K562 (cell line): ENCODE measurements at regions of chr17 and their contacts with region 1.

Region 1: DNA sequence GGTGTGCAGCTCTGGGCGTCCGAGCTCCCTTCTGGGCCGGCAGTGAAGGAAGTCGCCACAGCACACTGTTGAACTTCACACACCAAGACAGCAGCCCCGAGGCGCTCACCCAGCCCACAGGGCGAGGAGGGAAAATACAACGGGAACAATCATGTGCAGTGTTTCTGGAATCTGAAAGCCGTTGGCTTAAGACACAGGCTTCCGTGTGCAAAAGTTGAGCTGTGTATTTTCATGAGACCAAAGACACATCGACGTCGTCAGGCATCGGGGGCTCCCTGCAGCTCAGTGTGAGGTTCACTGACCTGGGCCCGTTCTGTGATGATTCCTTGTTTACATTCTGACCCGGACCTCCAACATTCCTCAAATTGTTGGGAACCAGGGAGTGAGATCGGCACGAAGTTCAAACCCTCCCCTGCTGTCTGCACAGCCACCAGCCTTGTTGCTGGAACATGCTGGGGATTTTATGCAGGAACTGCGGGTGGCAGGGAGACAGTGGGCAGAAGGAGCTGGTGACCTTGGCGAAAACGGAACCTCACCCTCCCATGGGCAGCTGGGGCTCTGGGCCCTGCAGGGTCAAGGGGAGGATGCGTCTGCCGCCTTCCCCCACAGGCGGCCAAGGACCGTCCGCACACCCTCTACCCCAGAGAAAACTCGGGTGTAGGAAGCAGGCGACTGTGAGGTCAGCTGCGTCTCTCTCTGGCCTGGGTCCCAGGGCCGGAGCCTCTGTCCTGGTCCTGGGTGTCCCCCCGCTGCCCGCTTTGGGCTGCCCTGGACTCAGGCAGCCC is 72.2 kb downstream of the METRNL start:
- DNase-seq: peak in 1 of 4 experiments; percentile 9
- ATAC-seq: no peak
- H3K4me3 ChIP-seq: no peak overlapping the region
- H3K27ac ChIP-seq: no peak overlapping the region
- H3K4me1 ChIP-seq: peaks cover 5 to 37% of the 10 kb centered on the region in 2 experiments; a peak in 4 of 5 replicates
- H3K27me3 ChIP-seq: peaks cover 13 to 63% of the 10 kb centered on the region in 2 experiments
- CTCF ChIP-seq: no peak
- EP300 ChIP-seq: no peak
- POLR2A ChIP-seq: no peak
- RAD21 ChIP-seq: no peak

Region 2: DNA sequence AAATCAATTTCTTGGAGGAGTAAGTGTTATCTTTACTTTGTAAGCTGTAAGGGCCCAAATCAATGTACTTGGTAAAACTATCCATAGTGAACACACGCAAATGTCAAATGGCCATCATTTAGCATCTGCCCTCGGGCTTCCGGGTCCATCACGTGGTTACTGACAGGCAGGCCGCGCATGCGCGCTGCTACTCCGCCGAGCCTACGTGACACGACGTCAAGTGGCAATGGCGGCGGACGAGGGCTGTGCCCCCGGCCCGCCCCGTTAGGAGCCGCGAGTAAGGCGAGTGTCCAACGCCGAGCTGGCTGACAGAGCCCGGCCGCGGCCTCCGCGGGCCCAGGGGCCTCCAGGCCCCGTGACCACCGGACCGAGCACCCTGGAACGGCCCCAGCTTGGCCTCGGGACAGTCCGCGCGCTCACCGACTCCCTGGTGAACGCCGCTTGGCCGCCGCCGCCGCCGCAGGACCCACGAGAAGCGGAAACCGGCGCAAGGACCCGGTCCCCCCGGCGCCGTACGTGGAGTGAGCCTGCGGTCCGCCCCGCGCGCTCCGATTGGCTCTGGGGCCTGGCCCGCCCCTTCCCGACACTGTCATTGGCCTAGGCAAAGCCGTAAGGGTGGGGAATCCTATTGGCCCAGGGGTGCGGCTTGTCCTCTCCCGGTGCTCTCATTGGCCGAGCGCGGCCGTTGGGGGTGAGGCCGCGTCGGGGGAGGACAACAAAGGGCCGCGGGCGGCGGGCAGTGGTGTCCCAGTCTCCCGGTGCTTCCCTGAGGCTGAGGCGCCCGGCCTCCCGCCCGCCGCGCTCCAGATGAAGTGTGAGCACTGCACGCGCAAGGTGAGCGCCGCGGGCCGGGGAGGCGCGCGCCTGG is 693.4 kb before region 1 on chr17 and contains the start of gene NARF:
- CTCF ChIA-PET with region 1: no interaction called
- POLR2A ChIA-PET with region 1: no interaction called
- in situ Hi-C with region 1: no loop called
- intact Hi-C with region 1: no loop called
- DNase-seq: peak; percentile 95 to 99 (median 97)
- ATAC-seq: peak; percentile 95
- H3K4me3 ChIP-seq: peak within 1 kb of the TSS; percentile 83
- H3K27ac ChIP-seq: peak within 1 kb of the TSS; percentile 97
- H3K4me1 ChIP-seq: peaks cover 49 to 67% of the 10 kb centered on the region in 2 experiments
- H3K27me3 ChIP-seq: no peaks in the 10 kb centered on the region
- CTCF ChIP-seq: no peak
- EP300 ChIP-seq: no peak
- POLR2A ChIP-seq: peak; percentile 98
- RAD21 ChIP-seq: peak; percentile 12 to 16; a peak in 2 of 4 replicates
- polyA plus RNA-seq, gene NARF: 60.4 to 114 TPM

Region 3: DNA sequence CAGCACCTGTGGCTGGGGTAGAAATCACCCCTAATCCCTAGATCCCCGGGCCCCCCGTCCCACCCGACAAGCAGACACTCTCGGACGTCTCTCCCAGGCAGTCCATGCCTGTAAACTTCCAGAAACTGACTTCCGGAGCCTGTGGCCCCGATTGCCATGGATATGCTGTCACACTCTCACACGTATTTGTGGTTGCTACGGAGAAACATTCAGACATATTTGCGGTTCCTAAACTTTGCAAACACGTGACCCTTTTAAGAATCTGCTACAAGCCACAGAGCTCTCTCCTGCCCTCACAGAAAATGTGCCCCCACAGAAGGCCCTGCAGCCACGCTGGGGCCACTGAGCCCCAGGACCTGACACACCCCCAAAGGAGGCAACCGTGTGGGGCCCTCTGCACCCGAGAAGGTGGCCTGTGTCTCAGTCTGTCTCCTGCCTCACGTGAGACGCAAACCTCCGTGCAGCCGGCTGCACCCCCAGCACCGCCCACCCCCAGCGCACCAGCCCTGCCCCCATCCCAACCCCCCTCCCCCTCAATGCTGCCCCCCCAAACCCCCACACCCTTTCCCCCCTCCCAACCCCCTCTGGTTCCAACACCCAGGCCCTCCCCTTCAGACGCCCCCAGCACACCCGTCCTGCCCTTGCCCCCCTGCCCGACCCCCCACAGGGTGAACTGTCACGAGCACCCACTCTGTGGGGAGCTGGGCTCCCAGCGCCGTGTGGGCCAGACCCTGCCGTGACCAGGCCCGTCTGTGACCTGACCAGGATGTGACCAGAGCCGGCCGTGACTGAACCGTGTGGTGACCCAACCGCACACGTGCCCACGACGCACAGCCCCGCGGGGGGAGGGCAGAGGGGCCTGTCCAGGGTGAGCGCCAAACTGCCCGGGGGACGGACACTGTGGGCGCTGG is 138.5 kb before region 1 on chr17:
- CTCF ChIA-PET with region 1: no interaction called
- POLR2A ChIA-PET with region 1: no interaction called
- in situ Hi-C with region 1: no loop called
- intact Hi-C with region 1: no loop called
- DNase-seq: no peak
- ATAC-seq: no peak
- H3K4me3 ChIP-seq: no peak overlapping the region
- H3K27ac ChIP-seq: no peak overlapping the region
- H3K4me1 ChIP-seq: peaks cover 0 to 13% of the 10 kb centered on the region in 2 experiments; a peak in 1 of 5 replicates
- H3K27me3 ChIP-seq: no peaks in the 10 kb centered on the region
- CTCF ChIP-seq: no peak
- EP300 ChIP-seq: no peak
- POLR2A ChIP-seq: no peak
- RAD21 ChIP-seq: no peak

Region 4: DNA sequence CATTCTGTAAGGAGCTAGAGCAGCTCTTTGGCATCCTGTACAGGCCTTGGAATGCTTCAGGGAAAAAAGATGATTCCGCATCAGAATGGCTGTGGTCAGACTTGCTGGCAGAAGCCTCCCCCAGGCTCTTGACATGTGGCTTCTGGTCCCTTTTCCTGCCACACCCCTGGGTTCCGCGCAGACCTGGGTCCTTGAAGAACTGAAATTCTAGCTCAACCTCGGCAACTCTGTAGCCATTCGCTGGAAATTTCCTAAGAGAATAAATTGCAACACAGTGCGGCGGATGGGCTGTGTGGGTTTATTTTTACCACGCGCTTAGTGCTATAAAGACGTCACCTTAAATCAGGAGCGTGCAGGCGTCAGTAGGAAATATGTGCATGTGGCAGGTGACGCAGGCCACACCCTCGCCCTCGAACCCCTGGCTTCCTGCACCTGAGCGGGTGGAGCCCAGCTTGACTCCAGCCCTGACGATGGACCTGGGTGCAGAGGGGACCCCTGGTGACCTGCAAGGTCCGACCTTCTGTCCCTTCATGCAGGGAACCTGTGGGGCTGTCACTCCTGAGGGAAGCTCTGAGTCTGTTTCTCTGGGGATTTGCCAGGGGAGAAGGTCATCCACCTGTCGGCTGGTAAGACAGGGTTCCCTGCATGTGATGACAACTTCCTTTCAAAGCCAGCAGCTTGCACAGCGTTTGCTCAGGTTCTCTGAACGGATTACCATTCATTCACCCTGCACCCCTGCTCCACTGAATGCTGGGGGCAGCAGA is 25.9 kb before region 1 on chr17:
- CTCF ChIA-PET with region 1: no interaction called
- POLR2A ChIA-PET with region 1: no interaction called
- in situ Hi-C with region 1: no loop called
- intact Hi-C with region 1: no loop called
- DNase-seq: no peak
- ATAC-seq: no peak; the same call in 2 of the 3 replicates
- H3K4me3 ChIP-seq: no peak overlapping the region
- H3K27ac ChIP-seq: no peak overlapping the region
- H3K4me1 ChIP-seq: peaks cover 13 to 40% of the 10 kb centered on the region in 2 experiments; a peak in 4 of 5 replicates
- H3K27me3 ChIP-seq: peaks cover 32 to 61% of the 10 kb centered on the region in 2 experiments
- CTCF ChIP-seq: no peak
- EP300 ChIP-seq: no peak
- POLR2A ChIP-seq: no peak
- RAD21 ChIP-seq: no peak

Region 5: DNA sequence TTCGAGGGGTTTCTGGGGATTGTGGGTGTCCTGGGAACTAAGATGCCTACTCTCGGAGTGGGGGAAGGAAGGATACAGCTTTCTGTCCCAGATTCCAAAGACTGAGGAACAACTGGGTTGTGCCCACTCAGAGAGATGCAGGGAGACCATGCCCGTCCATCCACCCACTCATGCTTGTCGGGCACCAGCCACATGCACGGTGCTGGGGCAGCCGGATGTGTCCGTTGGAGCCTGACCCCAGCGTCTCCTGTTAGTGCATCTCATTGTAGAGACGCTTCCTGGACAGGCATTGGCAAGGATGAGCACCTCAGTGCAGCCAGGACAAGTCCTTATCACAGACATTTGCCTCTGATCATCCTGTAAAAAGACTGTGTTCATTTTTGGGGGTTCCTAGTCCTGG is 14.1 kb before region 1 on chr17:
- CTCF ChIA-PET with region 1: no interaction called
- POLR2A ChIA-PET with region 1: interaction called, 10 read pairs
- in situ Hi-C with region 1: no loop called
- intact Hi-C with region 1: no loop called
- DNase-seq: no peak
- ATAC-seq: no peak
- H3K4me3 ChIP-seq: no peak overlapping the region
- H3K27ac ChIP-seq: no peak overlapping the region
- H3K4me1 ChIP-seq: peaks cover 4 to 20% of the 10 kb centered on the region in 2 experiments; a peak in 4 of 5 replicates
- H3K27me3 ChIP-seq: peaks cover 18 to 39% of the 10 kb centered on the region in 2 experiments; a peak in 4 of 5 replicates
- CTCF ChIP-seq: no peak
- EP300 ChIP-seq: no peak
- POLR2A ChIP-seq: no peak
- RAD21 ChIP-seq: no peak